GM10248 (cell line): ENCODE measurements at regions of chr3 and their contacts with region 1.

Region 1: DNA sequence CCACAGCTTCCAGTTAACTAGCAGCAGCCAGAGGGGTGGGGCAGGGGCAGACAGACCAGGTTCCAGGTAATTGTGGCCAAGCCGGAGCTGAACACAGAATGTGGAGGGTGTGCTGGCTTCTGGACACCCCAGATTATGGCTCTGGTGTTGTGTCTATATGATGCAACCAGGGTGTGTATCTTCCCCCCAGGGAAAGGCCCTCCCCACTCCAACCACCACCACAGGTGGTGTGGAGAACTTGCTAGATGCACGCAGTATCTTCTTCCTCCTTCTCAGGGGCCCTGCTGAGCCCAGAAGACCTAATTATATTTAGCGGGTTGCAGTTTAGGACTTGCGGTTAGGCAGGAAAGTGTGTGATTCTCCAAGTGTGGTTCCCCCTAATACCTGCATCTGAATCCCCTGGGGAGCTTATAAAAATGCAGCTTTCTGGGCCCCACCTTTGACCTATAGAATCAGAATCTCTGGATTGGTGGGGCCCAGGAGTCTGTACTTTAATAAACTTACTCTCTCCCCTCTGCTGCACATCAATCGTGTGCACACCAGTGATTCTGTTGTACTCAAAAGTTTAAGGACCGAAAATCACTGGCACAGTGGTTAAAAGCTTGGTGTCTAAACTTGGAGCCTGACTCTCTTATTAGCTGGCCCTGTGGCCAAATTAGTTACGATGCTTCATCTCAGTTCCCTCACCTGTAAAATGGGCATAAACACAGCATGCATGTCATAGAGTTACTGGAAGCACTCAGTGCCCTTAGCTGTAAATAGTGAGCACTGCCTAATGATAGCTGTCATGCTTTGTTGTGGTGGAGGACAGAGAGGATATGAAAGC is 379.1 kb upstream of the PROK2 start:
- DNase-seq: peak; percentile 79
- CTCF ChIP-seq: no peak

Region 2: GRCh38 chr3:72174040-72174439 is 10.0 kb after region 1 on chr3:
- CTCF ChIA-PET with region 1: interaction called, 10 read pairs
- POLR2A ChIA-PET with region 1: interaction called, 7 read pairs
- DNase-seq: no peak
- CTCF ChIP-seq: no peak